Cardiac septum (tissue), 1 donor: ENCODE measurements at regions of chr14 and their contacts with region 1.

Region 1: GRCh38 chr14:72715215-72715849 is 178.6 kb downstream of the DPF3 start:
- DNase-seq: peak; percentile 82

Region 2: GRCh38 chr14:72613231-72613974 is 101.9 kb before region 1 on chr14:
- intact Hi-C with region 1: loop called (anchors 5 kb)
- DNase-seq: peak; percentile 89